Calu3 (cell line): ENCODE measurements at regions of chr18 and their contacts with region 1.

Region 1: DNA sequence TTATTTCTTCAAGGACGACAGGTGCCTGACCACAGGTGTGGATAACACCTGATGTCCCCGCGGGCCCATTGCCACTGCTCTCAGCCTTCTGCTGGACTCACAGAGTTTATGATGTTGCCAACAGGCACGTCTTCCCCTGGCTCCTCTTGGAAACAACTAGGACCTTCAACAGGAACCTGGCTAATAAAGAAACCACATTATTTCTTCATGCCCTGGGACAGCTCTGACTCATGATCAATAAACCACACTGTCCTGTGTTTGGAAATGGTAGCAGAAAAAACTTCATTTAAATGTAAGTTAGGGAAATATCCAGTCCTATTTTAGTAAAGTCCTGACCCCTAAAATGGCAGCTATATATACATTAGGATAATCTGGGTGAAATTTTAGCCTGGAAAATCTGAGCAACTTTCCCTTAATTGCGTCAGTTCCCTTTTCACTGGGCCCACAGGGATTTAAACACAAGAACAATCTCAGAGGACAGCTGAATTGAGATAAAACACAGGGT is 158.9 kb downstream of the VAPA start:
- DNase-seq: no peak
- H3K4me3 Mint-ChIP-seq: no peak overlapping the region
- H3K27ac Mint-ChIP-seq: no peak overlapping the region
- H3K4me1 Mint-ChIP-seq: peaks cover 16% of the 10 kb centered on the region
- H3K27me3 Mint-ChIP-seq: peaks cover 19% of the 10 kb centered on the region
- CTCF ChIP-seq: no peak

Region 2: GRCh38 chr18:10055125-10055750 is 17.5 kb before region 1 on chr18:
- CTCF ChIA-PET with region 1: no interaction called
- intact Hi-C with region 1: no loop called
- DNase-seq: no peak
- H3K4me3 Mint-ChIP-seq: no peak overlapping the region
- H3K27ac Mint-ChIP-seq: no peak overlapping the region
- H3K4me1 Mint-ChIP-seq: peaks cover 10% of the 10 kb centered on the region
- H3K27me3 Mint-ChIP-seq: peaks cover 3% of the 10 kb centered on the region
- CTCF ChIP-seq: no peak

Region 3: DNA sequence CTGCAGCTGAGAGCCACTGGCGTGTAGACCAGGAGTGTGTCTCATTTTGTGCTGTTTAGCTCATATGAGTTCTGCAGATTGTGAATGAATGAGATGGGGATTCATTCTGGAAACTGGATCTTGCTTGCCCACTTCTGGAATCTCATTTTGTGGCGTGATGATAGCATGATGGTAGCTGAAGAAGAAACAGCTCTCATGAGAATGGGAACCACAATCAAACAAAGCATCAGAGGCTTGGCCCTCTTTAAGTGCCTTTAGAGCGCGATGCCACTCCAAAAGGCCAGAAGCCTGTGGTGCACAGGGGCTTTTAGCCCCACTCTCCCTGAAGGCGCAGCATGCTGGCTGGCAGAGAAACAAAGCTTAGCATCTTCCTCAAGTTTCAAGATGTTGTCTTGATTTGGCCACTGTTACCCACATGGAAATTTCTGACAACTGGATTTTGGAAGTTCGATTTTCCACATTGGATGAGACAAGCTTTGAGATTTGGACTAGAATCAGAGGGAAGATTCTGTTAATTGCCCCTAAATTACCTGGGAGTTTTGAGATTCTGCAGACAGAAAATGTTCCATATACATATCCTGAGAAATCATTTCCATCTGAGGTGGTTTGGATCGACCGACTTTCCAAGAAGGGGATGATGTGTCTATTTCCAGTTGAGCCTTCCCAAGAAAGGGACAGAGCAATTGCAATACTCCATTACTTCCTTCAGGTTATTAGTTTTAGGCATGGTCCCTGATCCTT is 75.6 kb after region 1 on chr18:
- CTCF ChIA-PET with region 1: no interaction called
- intact Hi-C with region 1: no loop called
- DNase-seq: no peak
- H3K4me3 Mint-ChIP-seq: no peak overlapping the region
- H3K27ac Mint-ChIP-seq: no peak overlapping the region
- H3K4me1 Mint-ChIP-seq: no peaks in the 10 kb centered on the region
- H3K27me3 Mint-ChIP-seq: peaks cover 14% of the 10 kb centered on the region
- CTCF ChIP-seq: no peak

Region 4: GRCh38 chr18:10437837-10438236 is 365.1 kb after region 1 on chr18:
- CTCF ChIA-PET with region 1: interaction called, 3 read pairs
- intact Hi-C with region 1: loop called (anchors 10 kb)
- DNase-seq: no peak
- H3K4me3 Mint-ChIP-seq: no peak overlapping the region
- H3K27ac Mint-ChIP-seq: no peak overlapping the region
- H3K4me1 Mint-ChIP-seq: no peaks in the 10 kb centered on the region
- H3K27me3 Mint-ChIP-seq: peaks cover 55% of the 10 kb centered on the region
- CTCF ChIP-seq: peak; percentile 33

Region 5: DNA sequence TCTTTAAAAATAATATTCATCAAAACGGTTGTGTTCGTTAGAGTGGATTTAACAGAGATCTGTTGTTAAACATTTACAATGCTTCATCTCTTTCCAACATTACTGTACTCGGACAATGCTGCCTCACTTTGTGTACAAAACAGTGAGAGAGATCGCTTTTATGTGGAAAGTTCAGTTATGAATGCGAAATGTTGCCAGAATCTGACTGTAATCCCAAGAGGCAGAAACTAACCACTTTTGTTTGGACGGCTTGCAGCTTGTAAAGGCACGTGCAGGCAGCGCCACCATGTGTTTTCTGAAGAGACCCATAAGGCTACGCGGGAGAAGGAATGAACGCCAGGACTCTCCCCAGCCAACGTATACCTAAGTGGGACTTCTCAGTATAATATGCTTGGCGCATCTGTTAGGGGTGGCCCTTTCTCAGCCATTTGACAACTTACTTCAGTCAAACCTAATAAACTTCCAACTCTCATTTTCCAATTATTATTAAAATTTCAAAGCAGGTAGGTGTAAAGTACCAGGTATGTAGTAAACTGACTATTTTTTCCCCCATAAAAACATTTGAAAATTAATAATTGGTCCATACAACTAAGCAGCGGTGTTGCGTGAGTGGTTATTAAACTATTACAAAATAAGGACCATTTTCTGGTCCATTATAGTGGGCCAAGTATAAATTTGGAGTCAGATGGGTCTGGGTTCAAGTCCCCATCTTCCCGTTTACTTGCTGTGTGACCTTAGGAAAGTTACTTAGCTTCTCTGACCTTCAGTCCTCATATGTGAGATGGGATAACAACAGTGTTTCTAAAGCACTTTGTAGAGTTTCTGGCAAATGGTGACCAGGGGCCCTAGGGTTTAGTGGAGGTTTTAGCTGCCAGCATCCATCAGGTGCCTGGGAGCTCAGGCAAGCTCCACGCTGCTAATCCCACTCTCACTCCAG is 447.5 kb after region 1 on chr18:
- CTCF ChIA-PET with region 1: no interaction called
- intact Hi-C with region 1: loop called (anchors 5 kb)
- DNase-seq: peak; percentile 74
- H3K4me3 Mint-ChIP-seq: no peak overlapping the region
- H3K27ac Mint-ChIP-seq: no peak overlapping the region
- H3K4me1 Mint-ChIP-seq: peaks cover 12% of the 10 kb centered on the region
- H3K27me3 Mint-ChIP-seq: peaks cover 71% of the 10 kb centered on the region
- CTCF ChIP-seq: peak; percentile 63